Breast epithelium (tissue), 4 donors: ENCODE measurements at regions of chr3 and their contacts with region 1.

Region 1: DNA sequence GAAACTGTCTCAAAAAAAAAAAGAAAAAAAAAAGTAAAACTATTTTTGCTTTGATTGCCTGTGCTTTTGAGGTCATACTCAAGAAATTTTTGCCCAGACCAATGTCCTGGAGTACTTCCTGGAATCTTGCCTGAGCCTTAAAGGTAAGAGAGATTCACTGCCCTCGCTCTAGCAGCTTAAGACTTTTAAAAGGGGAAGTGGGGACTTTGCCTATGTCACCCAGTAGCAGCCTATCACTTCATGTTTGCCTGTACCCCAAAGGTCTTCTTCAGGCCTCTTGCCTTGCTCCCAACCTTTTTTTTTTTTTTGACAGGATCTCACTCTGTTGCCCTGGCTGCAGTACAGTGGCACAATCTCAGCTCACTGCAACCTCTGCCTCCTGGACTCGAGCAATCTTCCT is 18.9 kb upstream of the GOLGB1 start:
- DNase-seq: no peak
- H3K4me3 ChIP-seq: no peak overlapping the region
- H3K27ac ChIP-seq: no peak overlapping the region
- H3K4me1 ChIP-seq: no peaks in the 10 kb centered on the region
- H3K27me3 ChIP-seq: no peaks in the 10 kb centered on the region
- CTCF ChIP-seq: no peak
- POLR2A ChIP-seq: no peak

Region 2: GRCh38 chr3:122938756-122939425 is 1170.4 kb after region 1 on chr3:
- intact Hi-C with region 1: loop called (anchors 10 kb)
- DNase-seq: no peak
- H3K4me3 ChIP-seq: no peak overlapping the region
- H3K27ac ChIP-seq: no peak overlapping the region
- H3K4me1 ChIP-seq: no peaks in the 10 kb centered on the region
- H3K27me3 ChIP-seq: no peaks in the 10 kb centered on the region
- CTCF ChIP-seq: no peak
- POLR2A ChIP-seq: no peak

Region 3: DNA sequence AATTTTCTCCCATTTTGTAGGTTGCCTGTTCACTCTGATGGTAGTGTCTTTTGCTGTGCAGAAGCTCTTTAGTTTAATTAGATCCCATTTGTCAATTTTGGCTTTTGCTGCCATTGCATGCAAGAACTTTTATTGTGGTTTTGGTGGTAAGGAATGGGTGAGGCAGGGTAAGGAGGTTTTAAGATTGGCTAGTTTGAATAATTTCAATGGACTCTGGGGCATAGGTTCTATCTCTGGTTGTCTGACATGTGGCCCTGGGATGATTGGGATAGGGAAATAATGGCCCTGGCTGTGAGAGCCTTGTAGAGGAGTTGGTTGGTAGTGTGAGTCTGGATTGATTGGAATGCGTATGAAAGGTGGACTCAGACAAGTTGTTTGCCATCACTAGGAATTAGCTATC is 1471.3 kb after region 1 on chr3:
- intact Hi-C with region 1: loop called (anchors 5 kb)
- DNase-seq: no peak
- H3K4me3 ChIP-seq: no peak overlapping the region
- H3K27ac ChIP-seq: no peak overlapping the region
- H3K4me1 ChIP-seq: no peaks in the 10 kb centered on the region
- H3K27me3 ChIP-seq: no peaks in the 10 kb centered on the region
- CTCF ChIP-seq: no peak
- POLR2A ChIP-seq: no peak